Panc1 (cell line): ENCODE measurements at regions of chr7 and their contacts with region 1.

Region 1: DNA sequence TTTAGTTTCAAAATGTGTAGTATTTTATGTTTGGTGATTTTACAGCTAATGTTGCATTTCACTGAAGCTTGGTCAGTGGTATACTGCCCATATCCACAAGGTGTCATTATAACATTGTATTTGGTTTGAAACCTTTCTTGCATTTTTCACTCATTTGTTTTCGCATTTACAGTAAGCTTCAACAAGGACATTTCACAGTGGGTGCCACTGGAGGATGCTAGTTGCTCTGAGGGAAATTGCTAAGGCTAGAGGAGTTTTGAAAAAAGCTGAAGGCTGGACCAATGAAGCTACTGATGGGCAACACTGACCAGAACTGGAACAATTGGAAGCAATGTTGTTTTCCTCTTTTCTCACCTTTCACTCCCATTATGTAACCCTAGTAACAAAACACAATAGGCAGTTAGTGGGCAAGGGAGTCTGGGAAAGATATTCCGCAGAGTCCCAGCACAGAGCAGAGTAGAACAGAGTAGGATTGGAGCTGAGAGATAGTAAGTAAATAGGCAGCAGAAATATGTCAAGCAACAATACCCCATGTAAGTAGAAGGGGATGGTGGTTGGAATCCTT is 23.6 kb upstream of the SRI start:
- DNase-seq: peak; percentile 48
- ATAC-seq: peak; percentile 81
- H3K4me3 ChIP-seq: no peak overlapping the region
- H3K27ac ChIP-seq: no peak overlapping the region
- H3K4me1 ChIP-seq: no peaks in the 10 kb centered on the region
- H3K27me3 ChIP-seq: no peaks in the 10 kb centered on the region
- CTCF ChIP-seq: peak; percentile 72

Region 2: DNA sequence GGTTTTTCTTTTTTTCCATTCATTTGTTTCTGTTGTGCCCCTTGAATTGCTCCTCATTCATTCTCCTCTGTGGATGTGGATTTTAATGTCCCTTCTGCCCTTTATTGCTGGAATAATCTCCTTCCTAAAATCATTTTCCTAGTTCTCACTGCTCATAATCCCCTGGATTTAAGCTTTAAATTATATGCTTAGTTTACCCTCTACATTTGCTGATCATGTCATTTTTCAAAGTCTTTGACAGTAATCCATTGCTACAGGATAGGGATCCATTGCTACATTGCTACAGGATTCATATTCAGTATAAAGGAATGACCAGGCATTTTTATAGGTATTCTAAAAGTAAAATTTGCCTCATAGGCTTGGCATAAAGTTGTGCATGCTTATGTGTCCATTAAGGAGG is 295.1 kb before region 1 on chr7:
- CTCF ChIA-PET with region 1: no interaction called
- POLR2A ChIA-PET with region 1: no interaction called
- in situ Hi-C with region 1: no loop called
- intact Hi-C with region 1: no loop called
- DNase-seq: no peak
- ATAC-seq: no peak
- H3K4me3 ChIP-seq: no peak overlapping the region
- H3K27ac ChIP-seq: no peak overlapping the region
- H3K4me1 ChIP-seq: no peaks in the 10 kb centered on the region
- H3K27me3 ChIP-seq: no peaks in the 10 kb centered on the region
- CTCF ChIP-seq: no peak

Region 3: DNA sequence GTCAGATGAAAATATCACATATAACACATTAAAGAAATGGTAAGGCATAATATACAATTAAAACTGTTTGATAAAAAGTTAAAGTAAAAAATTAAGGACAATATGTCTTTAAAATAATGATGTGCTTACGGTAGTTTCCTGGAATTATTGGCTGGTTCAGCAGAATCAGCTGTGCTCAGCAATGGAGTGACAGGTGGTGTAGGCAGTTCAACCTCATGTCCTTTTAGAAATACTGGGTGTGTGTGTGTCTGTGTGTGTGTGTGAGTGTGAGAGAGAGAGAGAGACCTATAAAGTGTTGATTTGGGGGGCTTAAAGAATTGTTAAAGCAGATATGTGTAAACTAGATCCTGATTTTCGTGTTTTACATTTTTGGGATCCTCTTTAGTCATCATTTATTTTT is 168.2 kb before region 1 on chr7:
- CTCF ChIA-PET with region 1: no interaction called
- POLR2A ChIA-PET with region 1: no interaction called
- in situ Hi-C with region 1: no loop called
- intact Hi-C with region 1: no loop called
- DNase-seq: no peak
- ATAC-seq: no peak
- H3K4me3 ChIP-seq: no peak overlapping the region
- H3K27ac ChIP-seq: no peak overlapping the region
- H3K4me1 ChIP-seq: no peaks in the 10 kb centered on the region
- H3K27me3 ChIP-seq: peaks cover 2% of the 10 kb centered on the region; the same call in 1 of the 2 replicates
- CTCF ChIP-seq: no peak

Region 4: DNA sequence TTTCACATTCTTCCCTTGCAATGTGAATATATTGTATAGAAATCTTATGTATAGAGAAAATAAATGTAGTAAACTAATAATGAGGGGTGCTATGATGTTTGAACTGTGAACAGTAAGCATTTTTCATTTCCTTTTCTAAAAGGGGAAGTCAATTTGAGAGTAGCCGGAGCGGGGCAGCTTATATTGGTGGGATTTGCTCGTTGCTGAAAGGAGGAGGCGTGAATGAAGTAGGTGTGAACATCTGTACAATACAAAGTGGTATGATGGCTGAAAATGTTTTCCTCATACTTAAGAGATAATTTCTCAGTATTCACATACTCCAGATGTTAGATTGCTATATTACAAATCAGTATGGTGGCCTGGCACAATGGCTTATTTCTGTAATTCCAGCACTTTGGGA is 110.7 kb before region 1 on chr7:
- CTCF ChIA-PET with region 1: no interaction called
- POLR2A ChIA-PET with region 1: no interaction called
- in situ Hi-C with region 1: no loop called
- intact Hi-C with region 1: no loop called
- DNase-seq: no peak
- ATAC-seq: no peak
- H3K4me3 ChIP-seq: no peak overlapping the region
- H3K27ac ChIP-seq: no peak overlapping the region
- H3K4me1 ChIP-seq: no peaks in the 10 kb centered on the region
- H3K27me3 ChIP-seq: no peaks in the 10 kb centered on the region
- CTCF ChIP-seq: no peak

Region 5: GRCh38 chr7:88357781-88358525 is 114.5 kb after region 1 on chr7:
- CTCF ChIA-PET with region 1: no interaction called
- POLR2A ChIA-PET with region 1: no interaction called
- in situ Hi-C with region 1: no loop called
- intact Hi-C with region 1: loop called (anchors 2 kb)
- DNase-seq: no peak
- ATAC-seq: no peak
- H3K4me3 ChIP-seq: no peak overlapping the region
- H3K27ac ChIP-seq: no peak overlapping the region
- H3K4me1 ChIP-seq: no peaks in the 10 kb centered on the region
- H3K27me3 ChIP-seq: no peaks in the 10 kb centered on the region
- CTCF ChIP-seq: peak; percentile 48; the same call in 1 of the 2 replicates

Region 6: DNA sequence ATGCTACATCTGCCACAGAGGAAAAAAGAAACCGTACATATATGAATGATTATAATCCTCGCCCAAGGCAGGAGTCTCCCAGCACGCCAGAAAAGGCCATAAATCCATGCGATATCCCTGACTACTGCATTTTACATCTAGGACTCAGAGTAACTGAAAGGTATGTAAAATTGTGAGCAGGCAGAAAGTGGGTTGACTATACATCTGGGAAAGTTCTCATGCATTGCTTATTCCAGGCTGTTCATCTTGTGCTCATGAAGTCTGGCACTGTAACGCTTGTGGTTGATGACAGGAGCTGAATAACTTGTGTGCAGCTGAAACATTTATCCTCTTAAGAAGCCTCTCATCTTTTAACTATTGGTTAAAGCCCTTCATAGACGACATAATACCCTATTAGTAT is 256.7 kb after region 1 on chr7:
- CTCF ChIA-PET with region 1: no interaction called
- POLR2A ChIA-PET with region 1: no interaction called
- in situ Hi-C with region 1: no loop called
- intact Hi-C with region 1: no loop called
- DNase-seq: no peak
- ATAC-seq: no peak
- H3K4me3 ChIP-seq: no peak overlapping the region
- H3K27ac ChIP-seq: no peak overlapping the region
- H3K4me1 ChIP-seq: no peaks in the 10 kb centered on the region
- H3K27me3 ChIP-seq: no peaks in the 10 kb centered on the region
- CTCF ChIP-seq: no peak